ENCODE measurements at regions of chr10 and their contacts with region 1.

Region 1: DNA sequence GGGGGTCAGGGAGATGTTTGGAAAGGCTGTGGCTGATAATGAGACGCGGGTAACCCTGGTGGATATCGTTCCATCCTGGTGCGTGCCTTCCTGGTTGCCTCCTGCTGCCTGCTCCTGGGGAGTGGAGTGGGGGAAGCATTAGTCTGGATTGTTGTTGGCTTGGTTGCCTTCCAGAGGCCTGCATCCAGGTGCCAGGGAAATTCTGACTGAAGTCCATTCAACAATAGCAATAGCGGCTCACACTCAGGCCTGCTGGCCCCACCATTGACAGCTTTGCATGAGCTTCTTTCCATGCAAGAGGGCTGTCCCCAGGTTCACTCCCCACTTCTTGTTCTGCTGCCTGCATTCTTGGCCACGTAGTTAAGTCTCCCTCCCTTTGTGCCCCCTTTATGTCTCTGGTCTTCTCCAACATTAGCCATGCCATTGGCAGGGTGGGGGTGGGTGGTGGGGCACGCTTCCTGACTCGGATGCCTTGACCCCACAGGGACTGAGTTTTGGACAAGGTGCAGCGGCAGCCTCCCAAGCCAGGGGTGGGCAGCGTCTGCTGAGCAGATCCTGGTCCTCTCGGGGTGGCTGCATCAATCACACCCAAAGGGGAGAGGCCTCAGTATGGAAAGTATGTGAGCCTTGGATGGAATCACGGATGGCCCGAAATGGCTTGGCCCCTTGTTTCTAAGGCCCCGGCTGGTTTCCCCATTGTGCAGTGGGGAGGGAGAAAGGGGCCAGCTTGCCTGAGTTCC is 150.2 kb downstream of the GRK5 start:
- DNase-seq: peak; percentile 44

Region 2: GRCh38 chr10:119237722-119238436 is 119.7 kb before region 1 on chr10:
- intact Hi-C with region 1: no loop called
- DNase-seq: no peak

Region 3: DNA sequence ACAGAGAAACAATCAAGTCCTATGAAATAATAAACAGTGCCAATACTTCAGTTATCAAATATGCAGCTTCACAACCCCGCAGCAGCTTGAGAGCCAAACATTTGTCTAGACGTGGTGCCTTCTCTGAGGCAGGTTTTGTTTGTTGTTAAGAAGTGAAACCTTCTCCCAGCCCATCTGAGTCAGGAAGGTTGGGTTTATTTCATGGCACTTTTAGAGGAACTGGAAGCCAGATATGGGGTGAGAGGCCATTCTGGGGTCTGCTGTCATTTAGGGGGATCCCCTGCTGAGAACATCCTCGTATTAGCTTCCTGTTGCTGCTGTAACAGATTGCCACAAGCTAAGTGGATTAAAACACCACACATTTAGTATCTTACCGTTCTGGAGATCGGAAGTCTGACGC is 36.6 kb before region 1 on chr10:
- intact Hi-C with region 1: loop called in 1 of 2 experiments (anchors 1 kb)
- DNase-seq: no peak

Region 4: DNA sequence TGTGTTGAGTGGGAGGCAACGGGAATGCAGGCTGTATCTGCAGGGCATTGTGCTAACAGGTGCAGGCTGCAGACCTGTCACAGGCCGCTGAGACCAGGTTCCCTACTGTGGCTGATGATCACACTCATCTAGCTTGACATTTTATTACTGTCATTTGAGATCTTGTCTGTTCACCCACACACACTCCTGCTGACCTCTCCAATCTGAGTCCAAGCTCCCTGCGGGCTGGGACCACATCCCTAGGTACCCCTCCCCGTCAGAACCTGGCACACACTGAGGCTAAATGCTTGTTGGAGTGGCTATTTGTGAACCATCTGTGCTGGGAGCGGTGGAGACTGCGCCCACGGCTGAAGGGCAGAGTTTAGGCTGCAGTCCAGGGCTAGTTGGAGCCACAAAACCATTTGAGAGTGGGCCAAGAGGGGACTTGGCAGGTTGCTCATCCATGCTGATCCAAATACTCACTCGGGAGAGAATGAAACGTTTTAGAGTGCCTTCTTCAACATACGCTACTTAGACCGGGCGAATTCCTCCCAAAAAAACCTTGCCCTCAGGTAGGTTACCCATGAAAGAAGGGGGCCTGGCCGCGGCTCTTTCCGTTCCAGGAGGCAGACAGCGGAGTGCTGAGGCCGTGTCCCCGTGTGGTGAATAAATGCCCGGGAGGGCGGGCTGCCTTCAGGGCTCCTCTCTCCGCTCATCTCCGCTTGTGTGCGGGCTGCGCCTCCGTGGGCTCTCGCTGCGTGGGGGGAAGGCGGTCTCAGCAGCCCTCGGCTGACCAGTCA is 20.6 kb after region 1 on chr10:
- intact Hi-C with region 1: loop called in 1 of 2 experiments (anchors 1 kb)
- DNase-seq: no peak

Region 5: GRCh38 chr10:119391440-119392251 is 34.1 kb after region 1 on chr10:
- intact Hi-C with region 1: no loop called
- DNase-seq: no peak

Measured in posterior vena cava (tissue), 2 donors.